CD8-positive, alpha-beta T cell (primary cell): ENCODE measurements at regions of chr19 and their contacts with region 1.

Region 1: GRCh38 chr19:11738746-11739620 is at the start of gene ZNF823:
- DNase-seq: peak; percentile 94 to 99 (median 97)
- ATAC-seq: peak; percentile 99
- H3K4me3 ChIP-seq: peak within 1 kb of the TSS; percentile 72 to 91
- H3K4me3 Mint-ChIP-seq: peak within 1 kb of the TSS; percentile 99
- H3K27ac ChIP-seq: peak within 1 kb of the TSS; percentile 52 to 54
- H3K27ac Mint-ChIP-seq: peak within 1 kb of the TSS; percentile 96
- H3K4me1 ChIP-seq: peaks cover 14% of the 10 kb centered on the region
- H3K4me1 Mint-ChIP-seq: peaks cover 32% of the 10 kb centered on the region
- H3K27me3 ChIP-seq: no peaks in the 10 kb centered on the region
- H3K27me3 Mint-ChIP-seq: no peaks in the 10 kb centered on the region
- CTCF ChIP-seq: no peak
- total RNA-seq, gene ZNF823: 2.8 to 4.3 TPM

Region 2: GRCh38 chr19:11463391-11463790 is 275.6 kb before region 1 on chr19:
- CTCF ChIA-PET with region 1: no interaction called
- POLR2A ChIA-PET with region 1: no interaction called
- intact Hi-C with region 1: no loop called
- DNase-seq: no peak
- ATAC-seq: peak; percentile 59
- H3K4me3 ChIP-seq: no peak overlapping the region
- H3K4me3 Mint-ChIP-seq: no peak overlapping the region
- H3K27ac ChIP-seq: no peak overlapping the region
- H3K27ac Mint-ChIP-seq: no peak overlapping the region
- H3K4me1 ChIP-seq: no peaks in the 10 kb centered on the region
- H3K4me1 Mint-ChIP-seq: no peaks in the 10 kb centered on the region
- H3K27me3 ChIP-seq: peaks cover 0 to 3% of the 10 kb centered on the region in 2 experiments
- H3K27me3 Mint-ChIP-seq: peaks cover 23% of the 10 kb centered on the region
- CTCF ChIP-seq: no peak

Region 3: GRCh38 chr19:11505032-11505503 is 233.9 kb before region 1 on chr19:
- CTCF ChIA-PET with region 1: no interaction called
- POLR2A ChIA-PET with region 1: no interaction called
- intact Hi-C with region 1: no loop called
- DNase-seq: peak; percentile 92 to 98 (median 96)
- ATAC-seq: peak; percentile 95
- H3K4me3 ChIP-seq: peak overlapping the region; percentile 56 to 96
- H3K4me3 Mint-ChIP-seq: peak overlapping the region; percentile 93
- H3K27ac ChIP-seq: peak overlapping the region; percentile 58 to 97
- H3K27ac Mint-ChIP-seq: peak overlapping the region; percentile 84
- H3K4me1 ChIP-seq: peaks cover 14% of the 10 kb centered on the region
- H3K4me1 Mint-ChIP-seq: peaks cover 18% of the 10 kb centered on the region
- H3K27me3 ChIP-seq: no peaks in the 10 kb centered on the region
- H3K27me3 Mint-ChIP-seq: no peaks in the 10 kb centered on the region
- CTCF ChIP-seq: no peak

Region 4: GRCh38 chr19:11597202-11598102 is 141.5 kb before region 1 on chr19 and contains the start of gene ZNF627:
- CTCF ChIA-PET with region 1: no interaction called
- POLR2A ChIA-PET with region 1: no interaction called
- intact Hi-C with region 1: loop called in 1 of 2 experiments (anchors 1 kb)
- DNase-seq: peak; percentile 94 to 99 (median 98)
- ATAC-seq: peak; percentile 99
- H3K4me3 ChIP-seq: peak within 1 kb of the TSS; percentile 97 to 98
- H3K4me3 Mint-ChIP-seq: peak within 1 kb of the TSS; percentile 88
- H3K27ac ChIP-seq: peak within 1 kb of the TSS; percentile 89
- H3K27ac Mint-ChIP-seq: peak within 1 kb of the TSS; percentile 92
- H3K4me1 ChIP-seq: peaks cover 16% of the 10 kb centered on the region
- H3K4me1 Mint-ChIP-seq: peaks cover 32% of the 10 kb centered on the region
- H3K27me3 ChIP-seq: no peaks in the 10 kb centered on the region
- H3K27me3 Mint-ChIP-seq: no peaks in the 10 kb centered on the region
- CTCF ChIP-seq: no peak
- total RNA-seq, gene ZNF627: 10.7 to 11.0 TPM

Region 5: DNA sequence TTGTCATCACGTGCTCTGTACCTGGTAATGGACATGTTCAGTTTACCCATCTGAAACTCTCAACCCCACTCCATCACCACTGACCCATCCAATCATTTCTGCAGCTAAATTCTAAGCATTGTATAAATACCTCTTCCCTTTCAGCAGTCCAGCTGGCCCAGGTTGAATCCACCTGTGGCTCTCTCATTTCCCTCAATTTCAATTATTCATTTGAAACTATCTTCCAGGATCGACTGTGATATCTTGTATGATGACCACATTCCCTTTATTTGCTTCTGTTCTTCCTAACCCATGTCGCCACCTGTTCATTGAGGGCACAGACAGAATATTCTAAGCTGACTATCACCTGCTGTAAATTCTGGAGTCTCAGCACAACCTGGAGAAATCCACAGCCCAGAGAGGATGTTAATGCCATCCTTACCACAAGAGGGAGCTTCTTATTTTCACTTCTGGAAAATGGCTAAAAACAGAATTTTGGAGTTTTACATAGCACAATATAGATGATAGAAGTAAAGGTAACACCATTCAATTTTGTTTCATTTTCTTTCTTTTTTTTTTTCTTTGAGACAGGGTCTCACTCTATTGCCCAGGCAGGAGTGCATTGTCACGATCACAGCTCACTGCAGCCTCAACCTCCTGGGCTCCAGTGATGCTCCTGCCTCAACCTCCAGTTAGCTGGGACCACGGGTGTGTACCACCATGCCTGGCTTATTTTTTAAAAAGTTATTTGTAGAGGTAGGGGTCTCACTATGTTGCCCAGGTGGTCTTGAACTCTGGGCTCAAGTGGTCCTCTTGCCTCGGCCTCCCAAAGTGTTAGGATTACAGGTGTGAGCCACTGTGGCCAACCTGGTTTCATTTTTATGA is 38.8 kb before region 1 on chr19:
- CTCF ChIA-PET with region 1: interaction called, 7 read pairs
- POLR2A ChIA-PET with region 1: no interaction called
- intact Hi-C with region 1: loop called (anchors 1 to 2 kb)
- DNase-seq: peak in 3 of 9 experiments; percentile 5 to 48 (median 32)
- ATAC-seq: no peak
- H3K4me3 ChIP-seq: no peak overlapping the region
- H3K4me3 Mint-ChIP-seq: no peak overlapping the region
- H3K27ac ChIP-seq: no peak overlapping the region
- H3K27ac Mint-ChIP-seq: no peak overlapping the region
- H3K4me1 ChIP-seq: peaks cover 1% of the 10 kb centered on the region
- H3K4me1 Mint-ChIP-seq: no peaks in the 10 kb centered on the region
- H3K27me3 ChIP-seq: peaks cover 0 to 2% of the 10 kb centered on the region in 2 experiments
- H3K27me3 Mint-ChIP-seq: peaks cover 8% of the 10 kb centered on the region
- CTCF ChIP-seq: peak; percentile 69

Region 6: DNA sequence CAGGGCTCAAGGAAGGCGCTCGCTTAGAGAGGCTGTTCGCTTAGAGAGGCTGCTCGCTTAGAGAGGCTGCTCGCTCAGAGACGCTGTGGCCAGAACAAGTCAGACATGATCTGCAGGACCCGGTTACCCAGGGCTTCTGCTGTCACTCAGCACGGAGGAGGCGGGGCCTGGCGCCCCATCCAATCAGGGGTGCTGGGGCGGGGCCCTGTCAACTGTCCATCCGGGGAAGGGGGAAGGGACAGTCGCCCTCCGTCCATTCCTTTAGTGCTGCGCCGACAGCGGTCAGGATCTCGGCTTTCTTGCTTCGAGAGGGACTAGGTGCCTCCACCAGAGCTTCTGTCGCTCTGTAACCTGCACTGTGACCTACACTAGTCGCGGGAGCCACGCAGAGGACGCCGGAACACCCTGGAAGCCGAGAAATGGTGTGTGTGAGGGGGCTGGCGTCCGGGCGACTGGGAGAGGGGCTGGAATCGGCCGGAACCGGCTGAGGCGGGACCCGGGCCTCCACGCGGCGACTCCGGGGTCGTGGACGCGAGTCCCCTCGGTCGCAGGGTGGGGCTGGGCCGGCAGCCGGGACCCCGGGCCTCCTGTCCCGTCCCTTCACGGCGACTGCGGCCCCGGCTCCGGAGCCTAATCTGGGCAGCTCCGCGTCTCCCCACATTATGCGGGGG is 75.2 kb after region 1 on chr19 and contains the start of gene ZNF440:
- CTCF ChIA-PET with region 1: no interaction called
- POLR2A ChIA-PET with region 1: no interaction called
- intact Hi-C with region 1: loop called in 1 of 2 experiments (anchors 2 kb)
- DNase-seq: peak; percentile 66 to 88 (median 79)
- ATAC-seq: peak; percentile 99
- H3K4me3 ChIP-seq: peak within 1 kb of the TSS; percentile 89 to 95
- H3K4me3 Mint-ChIP-seq: peak within 1 kb of the TSS; percentile 95
- H3K27ac ChIP-seq: peak within 1 kb of the TSS; percentile 45 to 51
- H3K27ac Mint-ChIP-seq: peak within 1 kb of the TSS; percentile 86
- H3K4me1 ChIP-seq: peaks cover 6% of the 10 kb centered on the region
- H3K4me1 Mint-ChIP-seq: peaks cover 32% of the 10 kb centered on the region
- H3K27me3 ChIP-seq: no peaks in the 10 kb centered on the region
- H3K27me3 Mint-ChIP-seq: no peaks in the 10 kb centered on the region
- CTCF ChIP-seq: no peak
- total RNA-seq, gene ZNF440: 6.4 to 7.9 TPM

Region 7: GRCh38 chr19:12162882-12163806 is 424.2 kb after region 1 on chr19 and contains the start of gene ZNF136:
- CTCF ChIA-PET with region 1: no interaction called
- POLR2A ChIA-PET with region 1: no interaction called
- intact Hi-C with region 1: loop called in 1 of 2 experiments (anchors 2 kb)
- DNase-seq: peak; percentile 84 to 97 (median 91)
- ATAC-seq: peak; percentile 99
- H3K4me3 ChIP-seq: peak within 1 kb of the TSS; percentile 83 to 86
- H3K4me3 Mint-ChIP-seq: peak within 1 kb of the TSS; percentile 96
- H3K27ac ChIP-seq: peak within 1 kb of the TSS; percentile 93 to 96
- H3K27ac Mint-ChIP-seq: peak within 1 kb of the TSS; percentile 98
- H3K4me1 ChIP-seq: peaks cover 25% of the 10 kb centered on the region
- H3K4me1 Mint-ChIP-seq: peaks cover 46% of the 10 kb centered on the region
- H3K27me3 ChIP-seq: no peaks in the 10 kb centered on the region
- H3K27me3 Mint-ChIP-seq: no peaks in the 10 kb centered on the region
- CTCF ChIP-seq: no peak
- total RNA-seq, gene ZNF136: 41.7 to 42.1 TPM